HEK293 (cell line): ENCODE measurements at regions of chr7 and their contacts with region 1.

Region 1: GRCh38 chr7:146090023-146090645 is 26.5 kb upstream of the CNTNAP2 start:
- H3K4me3 ChIP-seq: no peak overlapping the region
- H3K27ac ChIP-seq: no peak overlapping the region
- H3K4me1 ChIP-seq: no peaks in the 10 kb centered on the region
- CTCF ChIP-seq: no peak

Region 2: DNA sequence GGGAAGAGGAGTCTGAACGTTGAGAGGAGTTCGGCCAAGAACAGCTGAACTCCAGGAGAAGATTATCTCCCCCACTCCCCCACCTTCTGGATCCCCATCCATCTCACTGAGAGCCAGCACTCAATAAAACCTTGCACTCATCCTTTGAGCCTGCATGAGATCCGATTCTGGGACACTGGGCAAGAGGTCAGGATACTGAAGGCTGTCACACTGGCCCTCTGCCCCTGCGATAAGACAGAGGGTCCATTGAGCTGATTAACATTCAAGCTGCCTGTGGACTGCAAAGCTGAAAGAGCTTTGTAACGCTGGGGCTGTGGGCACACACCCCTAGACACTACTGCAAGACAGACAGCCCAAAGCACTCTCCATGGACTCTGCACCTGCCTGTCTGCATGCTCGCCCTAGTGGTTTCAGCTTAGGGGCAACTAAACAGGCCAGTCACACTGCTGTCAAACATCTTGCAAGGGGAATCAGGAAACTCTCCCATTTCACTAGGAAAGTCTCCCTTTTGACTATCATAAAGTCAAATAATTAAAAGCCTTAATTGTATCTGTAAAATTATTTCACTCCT is 15.9 kb before region 1 on chr7:
- CTCF ChIA-PET with region 1: interaction called, 22 read pairs
- POLR2A ChIA-PET with region 1: no interaction called
- H3K4me3 ChIP-seq: no peak overlapping the region
- H3K27ac ChIP-seq: no peak overlapping the region
- H3K4me1 ChIP-seq: no peaks in the 10 kb centered on the region
- CTCF ChIP-seq: no peak